ENCODE measurements at regions of chr18 and their contacts with region 1.

Region 1: DNA sequence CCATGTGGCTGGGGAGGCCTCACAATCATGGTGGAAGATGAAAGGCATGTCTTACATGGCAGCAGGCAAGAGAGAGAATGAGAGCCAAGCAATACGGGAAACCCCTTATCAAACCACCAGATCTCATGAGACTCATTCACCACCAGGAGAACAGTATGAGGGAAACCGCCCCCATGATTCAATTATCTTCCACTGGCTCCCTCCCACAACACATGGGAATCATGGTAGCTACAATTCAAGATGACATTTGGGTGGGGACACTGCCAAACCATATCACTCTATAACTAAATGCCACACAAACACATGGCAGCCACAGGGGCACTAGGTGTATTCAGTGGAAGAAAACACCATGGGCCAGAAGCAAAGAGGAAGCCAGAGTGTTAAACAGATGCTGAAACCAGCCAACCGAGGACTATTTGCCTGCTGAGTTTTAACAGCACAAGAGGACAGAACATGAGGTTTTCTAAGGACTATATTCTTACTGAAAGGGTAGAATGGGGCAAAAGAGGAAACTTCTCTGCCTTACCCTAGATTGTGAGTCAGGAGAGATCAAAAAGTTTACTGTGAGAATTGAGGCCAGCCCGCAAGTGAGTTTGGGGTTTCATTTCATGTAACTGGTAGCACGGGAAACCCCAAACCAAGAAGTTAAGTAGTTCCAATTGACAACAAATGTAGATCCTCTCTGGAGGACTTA is 49.2 kb downstream of the SIGLEC15 start:
- DNase-seq: peak; percentile 87
- H3K4me3 Mint-ChIP-seq: peak overlapping the region; percentile 1
- H3K27ac Mint-ChIP-seq: peak overlapping the region; percentile 94
- H3K4me1 Mint-ChIP-seq: peaks cover 31% of the 10 kb centered on the region
- H3K27me3 Mint-ChIP-seq: no peaks in the 10 kb centered on the region

Region 2: GRCh38 chr18:45621061-45621511 is 253.6 kb before region 1 on chr18:
- CTCF ChIA-PET with region 1: interaction called, 12 read pairs
- POLR2A ChIA-PET with region 1: no interaction called
- intact Hi-C with region 1: loop called (anchors 2 kb)
- DNase-seq: peak; percentile 44
- H3K4me3 Mint-ChIP-seq: no peak overlapping the region
- H3K27ac Mint-ChIP-seq: no peak overlapping the region
- H3K4me1 Mint-ChIP-seq: no peaks in the 10 kb centered on the region
- H3K27me3 Mint-ChIP-seq: peaks cover 6% of the 10 kb centered on the region

Region 3: GRCh38 chr18:45802608-45803492 is 71.8 kb before region 1 on chr18:
- CTCF ChIA-PET with region 1: interaction called, 13 read pairs
- POLR2A ChIA-PET with region 1: no interaction called
- intact Hi-C with region 1: loop called (anchors 5 kb)
- DNase-seq: peak; percentile 52
- H3K4me3 Mint-ChIP-seq: no peak overlapping the region
- H3K27ac Mint-ChIP-seq: no peak overlapping the region
- H3K4me1 Mint-ChIP-seq: peaks cover 8% of the 10 kb centered on the region
- H3K27me3 Mint-ChIP-seq: peaks cover 7% of the 10 kb centered on the region

Region 4: DNA sequence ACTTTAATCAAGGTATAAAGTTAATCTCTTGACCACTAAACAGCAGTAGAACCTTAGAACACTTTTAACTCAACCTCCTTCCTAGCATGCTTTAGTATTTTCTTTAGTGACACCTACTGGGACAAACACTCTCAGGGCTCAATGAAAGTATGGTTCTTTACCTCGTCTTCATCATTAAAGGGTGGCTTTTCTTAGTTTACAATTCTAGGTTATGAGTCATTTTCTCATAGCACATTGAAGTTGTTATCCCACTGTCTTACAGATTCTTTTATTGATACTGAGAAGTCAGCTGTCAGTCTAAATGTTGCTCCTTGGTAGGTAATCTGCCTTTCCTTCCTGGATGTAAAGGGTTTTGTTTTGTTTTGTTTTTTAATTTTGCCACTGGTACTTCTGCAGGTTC is 11.2 kb before region 1 on chr18:
- CTCF ChIA-PET with region 1: interaction called, 22 read pairs
- POLR2A ChIA-PET with region 1: no interaction called
- intact Hi-C with region 1: loop called (anchors 1 kb)
- DNase-seq: no peak
- H3K4me3 Mint-ChIP-seq: no peak overlapping the region
- H3K27ac Mint-ChIP-seq: no peak overlapping the region
- H3K4me1 Mint-ChIP-seq: peaks cover 10% of the 10 kb centered on the region
- H3K27me3 Mint-ChIP-seq: no peaks in the 10 kb centered on the region

Region 5: GRCh38 chr18:45923138-45923537 is 48.5 kb after region 1 on chr18:
- CTCF ChIA-PET with region 1: no interaction called
- POLR2A ChIA-PET with region 1: no interaction called
- intact Hi-C with region 1: no loop called
- DNase-seq: no peak
- H3K4me3 Mint-ChIP-seq: no peak overlapping the region
- H3K27ac Mint-ChIP-seq: no peak overlapping the region
- H3K4me1 Mint-ChIP-seq: peaks cover 10% of the 10 kb centered on the region
- H3K27me3 Mint-ChIP-seq: no peaks in the 10 kb centered on the region

Region 6: DNA sequence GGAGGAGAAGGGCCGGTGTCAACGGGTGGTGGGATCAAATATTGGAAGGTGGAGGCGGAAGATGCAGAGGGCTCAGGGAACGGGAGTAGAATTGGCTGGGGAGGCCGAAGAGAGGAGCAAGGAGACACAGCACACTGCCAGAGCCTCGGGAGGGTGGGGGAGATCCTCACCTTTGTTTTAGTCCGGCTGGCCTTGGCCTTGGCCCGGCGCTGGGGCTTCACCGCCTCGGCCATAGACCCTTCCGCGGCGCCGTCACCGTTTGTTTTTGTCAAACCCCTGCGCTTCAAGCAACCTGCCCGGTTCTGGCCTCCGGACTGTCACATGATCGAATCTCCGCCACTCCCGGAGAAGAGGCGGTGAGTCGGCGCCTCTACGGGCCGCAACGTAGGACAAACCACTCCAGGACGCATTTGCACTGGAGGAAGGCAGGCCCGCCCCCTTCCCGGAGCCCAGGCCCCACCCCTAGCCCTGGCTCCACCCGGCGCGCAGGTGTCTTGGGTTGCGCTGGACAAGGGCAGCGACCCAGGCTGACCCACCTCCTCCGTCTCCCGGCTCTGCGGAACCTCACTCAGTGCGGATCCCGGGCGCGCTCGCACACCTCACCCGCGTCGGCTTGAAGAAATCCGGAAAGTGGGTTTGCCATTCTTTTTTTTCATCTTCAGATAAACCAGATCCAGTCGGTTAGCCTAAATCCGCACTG is 92.5 kb after region 1 on chr18 and contains the start of gene EPG5:
- CTCF ChIA-PET with region 1: interaction called, 8 read pairs
- POLR2A ChIA-PET with region 1: no interaction called
- intact Hi-C with region 1: loop called (anchors 1 kb)
- DNase-seq: peak; percentile 97
- H3K4me3 Mint-ChIP-seq: peak within 1 kb of the TSS; percentile 93
- H3K27ac Mint-ChIP-seq: peak within 1 kb of the TSS; percentile 83
- H3K4me1 Mint-ChIP-seq: peaks cover 33% of the 10 kb centered on the region
- H3K27me3 Mint-ChIP-seq: no peaks in the 10 kb centered on the region
- total RNA-seq, gene EPG5: 18.8 to 21.4 TPM

Region 7: GRCh38 chr18:46013484-46014189 is 139.0 kb after region 1 on chr18:
- CTCF ChIA-PET with region 1: no interaction called
- POLR2A ChIA-PET with region 1: no interaction called
- intact Hi-C with region 1: loop called (anchors 1 kb)
- DNase-seq: peak; percentile 19
- H3K4me3 Mint-ChIP-seq: no peak overlapping the region
- H3K27ac Mint-ChIP-seq: peak overlapping the region; percentile 28
- H3K4me1 Mint-ChIP-seq: peaks cover 16% of the 10 kb centered on the region
- H3K27me3 Mint-ChIP-seq: peaks cover 2% of the 10 kb centered on the region

Measured in activated CD4-positive, alpha-beta memory T cell treated with anti-CD3 and anti-CD28 coated beads for 36 hours (primary cell).